ENCODE measurements at regions of chr11 and their contacts with region 1.

Region 1: DNA sequence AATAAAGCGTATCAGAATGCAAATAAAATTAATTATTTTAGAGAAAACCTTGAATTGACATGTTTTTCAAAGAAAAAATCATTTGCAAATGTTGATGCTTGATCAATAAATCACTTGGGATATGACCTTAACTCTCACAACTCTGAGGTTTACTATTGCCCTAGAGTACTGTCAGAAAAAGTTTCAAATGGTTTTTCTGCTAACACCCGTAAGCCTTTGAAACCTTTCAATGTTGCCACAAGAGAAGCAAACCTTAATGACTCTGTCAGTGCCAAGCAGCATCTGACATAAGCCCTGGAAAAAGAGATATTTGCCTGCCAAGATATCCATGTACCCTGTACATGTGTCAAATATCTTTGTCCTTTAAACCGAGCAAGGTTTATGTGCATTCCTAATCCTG is 384.3 kb upstream of the ARHGAP42 start:
- DNase-seq: no peak
- ATAC-seq: no peak
- H3K4me3 ChIP-seq: no peak overlapping the region
- H3K27ac ChIP-seq: no peak overlapping the region
- H3K4me1 ChIP-seq: peaks cover 0 to 3% (median 0%) of the 10 kb centered on the region in 12 donors
- H3K27me3 ChIP-seq: no peaks in the 10 kb centered on the region
- CTCF ChIP-seq: no peak
- POLR2A ChIP-seq: no peak

Region 2: DNA sequence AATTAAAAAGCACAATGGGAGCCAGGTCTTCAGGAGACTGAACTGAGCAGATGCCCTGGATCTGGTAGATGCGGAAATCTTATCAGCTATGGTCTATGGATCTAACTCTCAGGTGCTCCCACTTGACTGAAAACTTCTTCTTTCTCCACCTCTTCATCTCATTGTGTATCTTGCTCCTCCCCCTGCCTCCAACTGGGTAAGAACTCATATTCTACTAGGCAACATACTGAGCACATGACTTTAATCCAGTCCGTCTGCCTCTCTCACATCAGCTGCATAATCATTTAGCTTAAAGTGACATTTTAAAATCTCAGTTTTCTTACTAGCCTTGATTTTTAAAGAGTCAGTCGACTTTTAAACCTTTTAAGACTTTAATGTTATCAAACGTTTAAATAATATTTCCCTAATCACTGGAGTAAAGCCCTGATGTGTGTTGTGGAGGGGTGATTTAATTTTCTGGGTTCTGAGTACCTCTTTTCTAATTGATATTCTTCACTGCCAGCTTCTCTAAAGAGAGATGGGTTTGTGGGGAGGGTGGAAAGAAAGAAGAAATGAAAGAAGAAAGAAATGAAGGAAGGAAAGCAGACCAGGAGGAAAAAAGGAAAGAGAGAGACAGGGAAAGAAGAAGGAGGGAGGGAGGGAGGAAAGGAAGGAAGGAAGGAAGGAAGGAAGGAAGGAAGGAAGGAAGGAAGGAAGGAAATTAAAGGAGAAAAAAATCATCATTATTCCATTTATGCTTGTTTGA is 208.5 kb before region 1 on chr11:
- intact Hi-C with region 1: no loop called
- DNase-seq: no peak
- ATAC-seq: no peak
- H3K4me3 ChIP-seq: no peak overlapping the region
- H3K27ac ChIP-seq: no peak overlapping the region
- H3K4me1 ChIP-seq: no peaks in the 10 kb centered on the region
- H3K27me3 ChIP-seq: no peaks in the 10 kb centered on the region
- CTCF ChIP-seq: no peak
- POLR2A ChIP-seq: no peak

Region 3: DNA sequence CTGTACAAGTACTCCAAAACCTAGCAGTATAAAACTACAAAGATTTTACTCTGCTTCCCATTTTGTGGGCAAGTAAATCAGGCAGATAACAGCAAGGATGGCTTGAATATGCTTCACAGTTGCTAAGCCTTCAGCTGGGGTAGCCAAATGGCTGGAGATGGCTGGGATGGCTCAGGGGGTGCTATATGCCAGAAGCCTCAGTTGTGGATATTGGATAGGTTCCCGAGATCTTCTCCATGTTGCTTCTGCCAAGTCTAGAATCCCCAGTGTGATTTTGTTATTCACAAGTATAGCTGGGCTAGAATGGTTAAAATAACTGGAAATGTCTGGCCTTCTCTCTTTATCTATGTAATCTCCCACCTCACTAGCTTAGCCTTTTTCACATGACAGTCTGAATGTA is 88.0 kb before region 1 on chr11:
- intact Hi-C with region 1: loop called in 1 of 10 experiments (anchors 10 kb)
- DNase-seq: no peak
- ATAC-seq: no peak
- H3K4me3 ChIP-seq: no peak overlapping the region
- H3K27ac ChIP-seq: no peak overlapping the region
- H3K4me1 ChIP-seq: no peaks in the 10 kb centered on the region
- H3K27me3 ChIP-seq: no peaks in the 10 kb centered on the region
- CTCF ChIP-seq: no peak
- POLR2A ChIP-seq: no peak

Region 4: DNA sequence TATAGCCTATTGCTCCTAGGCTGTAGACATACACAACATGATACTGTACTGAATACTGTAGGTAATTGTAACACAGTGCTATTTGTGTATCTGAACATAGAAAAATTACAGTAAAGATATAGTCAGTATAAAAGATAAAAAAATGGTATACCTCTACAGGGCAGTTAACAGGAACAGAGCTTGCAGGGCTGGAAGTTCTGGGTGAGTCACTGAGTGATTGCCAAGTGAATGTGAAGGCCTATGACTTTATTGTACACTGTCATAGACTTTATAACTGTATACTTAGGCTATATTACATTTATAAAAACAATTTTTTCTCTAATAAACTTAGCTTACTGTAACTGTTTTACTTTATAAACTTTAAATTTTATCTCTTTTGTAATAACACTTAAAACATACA is 51.9 kb after region 1 on chr11:
- intact Hi-C with region 1: no loop called
- DNase-seq: no peak
- ATAC-seq: no peak
- H3K4me3 ChIP-seq: no peak overlapping the region
- H3K27ac ChIP-seq: no peak overlapping the region
- H3K4me1 ChIP-seq: no peaks in the 10 kb centered on the region
- H3K27me3 ChIP-seq: no peaks in the 10 kb centered on the region
- CTCF ChIP-seq: no peak
- POLR2A ChIP-seq: no peak

Measured in heart left ventricle (tissue), 16 donors.